Aorta (tissue), 5 donors: ENCODE measurements at regions of chr4 and their contacts with region 1.

Region 1: GRCh38 chr4:7192252-7193029 is at the start of gene SORCS2:
- DNase-seq: peak; percentile 71 to 88
- ATAC-seq: peak; percentile 85
- H3K4me3 ChIP-seq: peak within 1 kb of the TSS; percentile 59 to 63
- H3K27ac ChIP-seq: no peak within 1 kb of the TSS
- H3K4me1 ChIP-seq: no peaks in the 10 kb centered on the region
- H3K27me3 ChIP-seq: no peaks in the 10 kb centered on the region
- total RNA-seq, gene SORCS2: 2.3 to 8.4 TPM

Region 2: DNA sequence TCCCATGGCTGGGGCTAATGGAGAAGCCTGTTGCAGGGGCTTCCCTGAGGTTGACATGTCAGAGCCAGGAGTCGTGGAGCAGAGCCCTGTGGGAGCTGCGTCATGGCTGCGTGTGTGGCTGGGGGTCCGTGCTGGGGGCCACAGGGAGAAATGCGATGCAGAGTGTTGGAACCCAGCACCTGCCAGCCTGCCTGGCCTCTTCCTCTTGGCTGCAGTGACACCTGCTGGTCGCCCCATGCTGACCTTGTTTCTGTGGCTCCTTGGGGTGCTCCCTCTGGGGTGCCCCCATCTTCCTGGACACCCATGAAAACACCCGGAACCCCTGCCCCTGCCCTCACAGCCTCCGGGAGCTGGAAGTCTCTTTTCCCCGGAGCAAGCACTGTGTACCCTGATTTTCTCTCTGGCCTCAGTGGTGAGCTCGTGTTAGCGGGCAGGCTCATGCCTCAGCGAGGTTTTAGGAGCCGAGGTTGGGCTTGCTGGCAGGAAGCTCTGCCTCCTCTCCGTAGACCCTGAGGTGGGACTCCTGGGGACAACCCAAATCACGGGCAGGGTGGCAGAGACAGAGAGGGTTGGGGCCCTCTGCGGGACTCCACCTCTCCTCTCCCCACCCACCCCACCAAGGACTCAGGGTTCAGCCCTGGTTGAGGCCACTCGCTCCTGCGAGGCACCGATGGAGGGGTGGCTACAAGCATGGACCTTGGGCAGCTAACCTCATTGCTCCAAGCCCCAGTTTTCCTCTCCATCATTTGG is 103.6 kb after region 1 on chr4:
- intact Hi-C with region 1: loop called (anchors 2 kb)
- DNase-seq: peak in 1 of 2 donors; percentile 82
- ATAC-seq: peak; percentile 46
- H3K4me3 ChIP-seq: no peak overlapping the region
- H3K27ac ChIP-seq: no peak overlapping the region
- H3K4me1 ChIP-seq: no peaks in the 10 kb centered on the region
- H3K27me3 ChIP-seq: no peaks in the 10 kb centered on the region

Region 3: GRCh38 chr4:7335344-7336069 is 143.1 kb after region 1 on chr4:
- intact Hi-C with region 1: loop called in 1 of 2 experiments (anchors 5 kb)
- DNase-seq: peak in 1 of 2 donors; percentile 82
- ATAC-seq: no peak
- H3K4me3 ChIP-seq: no peak overlapping the region
- H3K27ac ChIP-seq: no peak overlapping the region
- H3K4me1 ChIP-seq: no peaks in the 10 kb centered on the region
- H3K27me3 ChIP-seq: no peaks in the 10 kb centered on the region

Region 4: DNA sequence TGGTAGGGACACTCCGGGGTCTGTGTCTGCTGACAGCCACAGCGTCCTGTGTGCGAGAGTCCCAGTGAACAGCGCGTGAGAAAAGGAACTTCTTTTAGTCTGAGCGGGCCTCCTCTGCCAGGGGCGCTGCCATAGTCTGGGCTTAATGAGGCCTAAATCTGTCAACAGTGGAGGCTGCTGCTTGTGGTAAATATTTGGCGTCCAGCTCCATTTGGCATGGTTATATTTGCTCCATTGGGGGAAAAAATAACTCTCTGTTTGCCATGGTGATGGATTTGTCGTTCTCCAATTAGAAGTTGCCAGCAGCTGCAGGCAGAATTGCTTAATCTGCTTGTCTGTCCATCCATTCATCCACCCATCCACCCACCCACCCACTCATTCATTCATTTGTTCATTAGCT is 313.7 kb after region 1 on chr4:
- intact Hi-C with region 1: no loop called
- DNase-seq: no peak
- ATAC-seq: no peak
- H3K4me3 ChIP-seq: no peak overlapping the region
- H3K27ac ChIP-seq: no peak overlapping the region
- H3K4me1 ChIP-seq: no peaks in the 10 kb centered on the region
- H3K27me3 ChIP-seq: no peaks in the 10 kb centered on the region

Region 5: DNA sequence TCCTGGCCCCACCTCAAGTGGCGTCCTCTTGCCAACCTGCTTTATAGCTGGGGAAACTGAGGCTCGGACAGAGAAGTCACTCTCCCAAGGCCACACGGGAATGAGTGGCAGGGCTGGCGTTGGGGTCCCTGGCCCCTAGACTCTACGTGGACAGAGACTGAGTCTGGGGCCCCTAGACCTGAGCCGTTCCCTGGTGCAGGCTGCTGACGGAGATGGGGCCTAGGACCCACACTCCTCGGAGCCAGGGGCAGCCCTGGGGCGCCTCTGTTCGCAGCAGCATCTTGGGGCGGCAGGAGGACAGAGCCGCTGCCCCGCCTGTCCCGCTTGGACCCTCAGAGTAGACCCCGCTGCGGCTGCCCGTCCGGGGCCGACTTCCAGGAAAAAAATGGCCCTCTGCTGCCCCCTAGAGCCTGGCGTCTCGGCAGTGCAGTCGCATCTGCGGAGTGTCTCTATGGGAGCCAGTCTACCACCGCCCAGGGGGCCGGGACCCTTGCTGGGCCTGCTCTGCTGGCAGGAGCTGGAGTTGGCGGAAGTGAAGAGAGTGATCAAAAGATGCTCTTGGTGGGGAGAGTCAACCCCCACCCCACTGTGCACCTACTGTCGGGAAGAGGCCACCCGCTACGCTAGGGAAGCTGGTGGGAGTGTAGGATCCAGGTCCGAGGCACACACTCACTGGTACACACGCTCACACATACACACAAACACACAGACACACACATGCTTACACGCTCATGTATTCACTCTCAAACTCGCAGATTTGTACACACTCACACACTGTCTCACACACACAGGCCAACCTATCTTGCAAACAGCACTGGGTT is 527.1 kb after region 1 on chr4:
- intact Hi-C with region 1: loop called (anchors 1 to 2 kb)
- DNase-seq: peak; percentile 75 to 90
- ATAC-seq: peak; percentile 48
- H3K4me3 ChIP-seq: no peak overlapping the region
- H3K27ac ChIP-seq: no peak overlapping the region
- H3K4me1 ChIP-seq: no peaks in the 10 kb centered on the region
- H3K27me3 ChIP-seq: no peaks in the 10 kb centered on the region